HEK293 (cell line): ENCODE measurements at regions of chr1 and their contacts with region 1.

Region 1: DNA sequence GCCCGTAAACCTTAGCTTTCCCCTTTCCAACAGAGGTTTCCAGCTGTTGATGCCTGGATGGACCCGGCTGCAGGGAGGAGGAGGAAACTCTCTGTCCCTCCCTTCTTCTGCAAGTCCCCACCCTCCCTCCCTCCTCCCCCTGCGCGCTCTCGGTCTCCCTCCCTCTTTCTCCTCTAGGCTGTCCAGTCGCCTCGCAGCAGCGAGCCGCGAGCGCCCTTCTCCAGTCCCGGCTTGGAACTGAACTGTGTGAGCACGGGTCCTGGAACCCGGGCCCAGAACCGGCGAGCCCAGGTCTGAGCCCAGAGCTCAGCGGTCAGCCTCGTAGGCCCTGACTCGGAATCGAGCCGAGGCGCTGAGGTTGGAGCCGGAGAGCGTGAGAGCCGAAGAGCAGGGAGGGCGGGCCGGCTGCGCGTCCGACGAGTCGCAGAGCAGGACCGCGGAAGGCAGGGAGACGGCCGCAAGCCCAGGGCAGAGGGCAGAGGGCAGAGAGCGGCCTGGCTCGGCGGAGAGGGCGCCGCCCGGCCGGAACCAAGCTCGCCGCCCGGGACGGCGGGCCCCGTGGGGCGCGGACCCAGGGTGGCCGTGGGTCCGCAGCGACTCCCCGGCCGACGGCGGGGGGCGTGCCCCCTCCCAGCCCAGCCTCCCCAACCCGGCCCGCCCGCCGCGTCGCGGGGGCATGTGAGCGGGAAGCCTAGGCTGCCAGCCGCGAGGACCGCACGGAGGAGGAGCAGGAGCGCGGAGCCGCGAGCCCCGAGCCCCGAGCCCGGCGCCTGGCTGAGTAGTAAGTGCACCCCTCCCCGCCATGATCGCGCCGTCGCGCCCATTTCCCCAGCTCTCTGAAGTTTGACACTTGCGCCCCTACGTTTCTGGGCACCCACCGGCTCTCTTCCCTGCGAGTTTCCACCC is at the start of gene SOX13:
- H3K4me3 ChIP-seq: peak within 1 kb of the TSS; percentile 64
- H3K27ac ChIP-seq: peak within 1 kb of the TSS; percentile 76; the same call in 1 of the 2 replicates
- H3K4me1 ChIP-seq: 0 out of 2 replicates have a peak, but pooled peaks cover 4% of the 10 kb centered on the region
- CTCF ChIP-seq: peak; percentile 69

Region 2: GRCh38 chr1:203871107-203871875 is 201.9 kb before region 1 on chr1:
- CTCF ChIA-PET with region 1: interaction called, 10 read pairs
- POLR2A ChIA-PET with region 1: interaction called, 3 read pairs
- H3K4me3 ChIP-seq: no peak overlapping the region
- H3K27ac ChIP-seq: no peak overlapping the region
- H3K4me1 ChIP-seq: no peaks in the 10 kb centered on the region
- CTCF ChIP-seq: peak; percentile 83

Region 3: GRCh38 chr1:204219971-204220608 is 146.9 kb after region 1 on chr1:
- CTCF ChIA-PET with region 1: no interaction called
- POLR2A ChIA-PET with region 1: no interaction called
- H3K4me3 ChIP-seq: no peak overlapping the region
- H3K27ac ChIP-seq: no peak overlapping the region
- H3K4me1 ChIP-seq: no peaks in the 10 kb centered on the region
- CTCF ChIP-seq: no peak